ENCODE measurements at regions of chr1 and their contacts with region 1.

Region 1: DNA sequence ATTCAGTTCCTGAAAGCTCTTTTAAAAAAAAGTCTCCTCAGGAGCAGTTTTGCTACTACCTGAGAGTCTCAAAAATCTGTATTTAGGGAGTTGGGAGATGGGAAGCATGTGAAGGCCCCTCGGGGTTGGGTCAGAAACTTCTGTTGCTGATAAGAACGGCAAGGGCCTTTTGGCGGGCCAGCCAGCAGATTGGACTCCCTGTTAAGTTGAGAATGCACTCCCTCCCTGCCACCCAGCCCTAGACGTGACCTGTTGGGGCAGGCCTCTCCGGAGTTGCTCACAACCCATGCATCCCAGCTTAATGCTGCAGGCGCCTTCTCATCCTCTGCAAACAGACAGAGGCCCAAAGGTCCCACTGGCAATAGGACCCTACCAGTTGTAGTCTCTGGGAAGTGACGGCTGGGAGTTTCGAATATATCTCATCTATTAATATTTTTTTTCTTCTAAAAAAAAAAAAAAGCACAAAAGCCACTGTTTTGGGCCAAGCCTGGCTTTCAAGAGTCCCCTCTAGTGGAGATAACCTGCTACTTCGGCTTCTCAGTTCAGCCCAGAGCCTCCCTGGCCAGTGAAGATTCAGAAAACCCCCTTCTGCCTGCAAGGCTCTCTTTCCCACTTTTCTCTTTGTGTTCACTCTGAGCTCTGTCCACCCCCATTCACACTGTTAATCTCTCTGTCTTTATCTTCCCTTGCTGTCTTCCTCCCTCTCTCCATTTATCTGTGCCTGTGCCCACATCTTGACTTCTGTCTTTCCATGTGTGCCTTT is 5.3 kb downstream of the PLXNA2 start:
- DNase-seq: peak in 3 of 5 donors; percentile 46 to 71 (median 52)
- H3K4me3 ChIP-seq: peak overlapping the region; percentile 8
- H3K27ac ChIP-seq: peak overlapping the region in 1 of 2 donors; percentile 42
- H3K4me1 ChIP-seq: peaks cover 35% of the 10 kb centered on the region
- H3K27me3 ChIP-seq: no peaks in the 10 kb centered on the region
- CTCF ChIP-seq: peak; percentile 50 to 79 (median 58)
- EP300 ChIP-seq: no peak
- POLR2A ChIP-seq: no peak

Region 2: DNA sequence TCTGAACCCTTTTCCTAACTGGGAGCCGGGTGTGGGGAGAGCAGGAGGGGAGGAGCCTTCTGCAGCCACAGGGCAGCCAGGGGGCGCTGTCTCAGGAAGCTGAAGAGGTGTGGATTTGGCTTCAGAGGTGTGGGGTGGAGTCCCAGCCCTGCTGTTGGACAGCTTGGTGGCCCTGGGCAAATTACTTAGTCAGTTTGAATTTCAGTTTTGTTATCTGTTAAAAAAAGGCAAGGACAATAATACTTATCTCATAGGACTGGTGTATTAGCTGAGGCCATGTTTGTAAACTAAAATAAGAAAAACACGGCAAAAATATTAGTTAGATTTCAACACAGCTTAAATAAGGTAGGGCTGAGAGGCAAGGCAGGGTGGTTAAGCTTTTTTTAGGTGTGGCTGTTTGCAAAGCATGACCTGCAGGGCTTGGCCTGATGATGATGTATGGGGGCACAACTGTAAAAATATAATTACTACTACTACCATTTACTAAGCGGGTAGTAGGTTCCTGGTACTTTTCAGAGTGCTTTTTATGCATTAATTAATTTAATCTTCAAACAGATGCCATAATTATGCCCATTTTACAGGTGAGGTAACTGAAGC is 106.5 kb before region 1 on chr1:
- intact Hi-C with region 1: loop called in 3 of 4 experiments (anchors 5 to 10 kb)
- DNase-seq: peak; percentile 62 to 88 (median 80)
- H3K4me3 ChIP-seq: no peak overlapping the region
- H3K27ac ChIP-seq: no peak overlapping the region
- H3K4me1 ChIP-seq: peaks cover 25% of the 10 kb centered on the region
- H3K27me3 ChIP-seq: no peaks in the 10 kb centered on the region
- CTCF ChIP-seq: peak; percentile 14 to 57 (median 38)
- EP300 ChIP-seq: no peak
- POLR2A ChIP-seq: no peak

Region 3: DNA sequence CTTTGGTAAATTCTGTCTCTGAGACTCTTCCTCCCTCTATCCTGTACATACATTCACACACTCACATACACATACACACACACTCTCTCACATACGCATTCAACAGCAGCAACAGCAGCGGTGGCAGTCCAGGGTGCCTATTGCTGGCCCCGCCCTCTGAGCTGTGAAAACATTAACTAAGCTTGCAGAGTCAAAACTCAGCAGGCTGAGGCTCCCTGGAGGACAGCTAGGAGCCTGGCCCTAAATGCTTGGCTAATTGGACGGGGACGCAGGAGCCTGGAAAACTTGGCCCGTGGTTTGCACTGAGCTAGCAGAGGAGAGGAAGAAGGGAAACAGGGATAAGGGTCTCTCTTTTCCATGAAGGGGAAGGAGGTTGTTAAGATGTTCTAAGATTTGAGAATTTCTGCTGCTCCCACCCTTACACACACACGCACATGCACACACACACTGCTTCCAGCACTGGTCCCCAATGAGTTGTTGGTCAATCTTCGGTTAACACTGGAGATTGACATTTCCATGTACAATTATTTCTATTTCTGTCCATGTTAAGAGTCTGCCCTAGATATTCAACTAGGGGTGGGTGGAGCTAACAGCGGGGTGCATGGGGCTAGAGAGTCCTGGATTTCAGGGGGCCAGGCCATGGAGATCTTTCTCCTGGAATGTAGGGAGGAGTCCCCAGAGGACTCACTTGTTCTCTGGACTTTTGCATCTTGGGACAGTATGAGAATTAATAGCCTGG is 88.9 kb before region 1 on chr1:
- intact Hi-C with region 1: loop called in 1 of 4 experiments (anchors 10 kb)
- DNase-seq: no peak
- H3K4me3 ChIP-seq: no peak overlapping the region
- H3K27ac ChIP-seq: no peak overlapping the region
- H3K4me1 ChIP-seq: peaks cover 9% of the 10 kb centered on the region
- H3K27me3 ChIP-seq: no peaks in the 10 kb centered on the region
- CTCF ChIP-seq: no peak
- EP300 ChIP-seq: no peak
- POLR2A ChIP-seq: no peak

Region 4: DNA sequence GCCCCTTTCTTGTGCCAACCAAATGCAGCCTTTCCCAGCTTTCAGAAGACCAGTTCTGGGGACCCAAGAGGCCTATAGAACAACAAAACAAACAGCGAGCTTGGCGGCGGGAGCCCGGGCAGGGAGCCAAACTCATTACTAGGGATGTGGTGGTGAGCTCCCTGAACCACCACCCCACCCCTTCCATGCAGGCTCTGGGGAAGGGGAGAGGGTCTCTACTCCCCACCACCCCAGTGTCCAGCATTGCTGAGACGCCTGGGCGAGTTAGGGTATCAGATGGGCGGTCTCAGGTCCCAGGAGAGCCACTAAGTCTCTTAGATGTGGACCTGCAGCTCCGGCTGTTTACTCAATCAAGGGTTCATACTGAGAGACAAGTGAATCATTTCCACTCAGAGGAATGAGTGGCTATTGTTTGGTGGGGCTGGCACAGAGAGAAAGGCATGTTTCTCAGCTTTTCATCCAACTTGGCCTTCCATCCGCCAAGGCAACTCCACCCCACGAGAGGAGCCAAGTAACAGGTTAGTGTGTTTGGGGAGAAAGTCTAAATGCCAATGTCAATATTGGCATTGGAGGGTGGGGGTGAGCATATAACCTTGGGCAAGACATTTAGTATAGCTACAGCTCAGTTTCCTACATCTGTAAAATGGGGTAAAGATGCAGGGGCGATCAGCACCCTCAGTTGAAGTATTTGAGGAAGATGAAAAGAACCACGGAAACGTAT is 35.6 kb before region 1 on chr1:
- intact Hi-C with region 1: loop called in 1 of 4 experiments (anchors 5 kb)
- DNase-seq: peak in 4 of 5 donors; percentile 58 to 71 (median 64)
- H3K4me3 ChIP-seq: no peak overlapping the region
- H3K27ac ChIP-seq: peak overlapping the region in 1 of 2 donors; percentile 20
- H3K4me1 ChIP-seq: peaks cover 17% of the 10 kb centered on the region
- H3K27me3 ChIP-seq: no peaks in the 10 kb centered on the region
- CTCF ChIP-seq: no peak
- EP300 ChIP-seq: no peak
- POLR2A ChIP-seq: no peak